CD14-positive monocyte (primary cell): ENCODE measurements at regions of chr1 and their contacts with region 1.

Region 1: DNA sequence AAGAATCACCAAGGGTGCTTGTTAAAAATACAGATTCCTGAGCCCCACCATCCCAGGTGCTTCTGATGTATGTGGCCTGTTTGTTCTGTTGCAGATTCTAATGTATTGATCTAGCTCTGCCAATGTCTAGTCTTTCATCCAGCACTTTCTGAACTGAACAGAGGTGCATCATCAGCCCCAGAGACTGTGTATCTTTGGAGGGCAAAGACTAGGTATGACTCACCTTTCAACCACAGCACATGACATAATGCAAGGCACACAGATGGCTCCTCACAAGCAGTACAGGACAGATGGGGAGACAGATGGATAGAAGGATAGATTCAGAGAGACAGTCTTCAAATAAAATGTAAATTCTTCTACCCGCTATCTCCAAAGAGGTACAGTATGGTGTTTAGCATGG is 32.3 kb downstream of the CD58 start:
- DNase-seq: peak; percentile 48 to 86 (median 55)
- H3K4me3 ChIP-seq: no peak overlapping the region
- H3K4me3 Mint-ChIP-seq: no peak overlapping the region
- H3K27ac ChIP-seq: peak overlapping the region in 1 of 2 donors; percentile 94
- H3K27ac Mint-ChIP-seq: peak overlapping the region; percentile 83 to 97 (median 95)
- H3K4me1 ChIP-seq: peaks cover 52 to 57% of the 10 kb centered on the region in 2 donors
- H3K4me1 Mint-ChIP-seq: peaks cover 58% of the 10 kb centered on the region
- H3K27me3 ChIP-seq: no peaks in the 10 kb centered on the region
- H3K27me3 Mint-ChIP-seq: peaks cover 0 to 3% (median 2%) of the 10 kb centered on the region in 3 donors
- CTCF ChIP-seq: no peak

Region 2: GRCh38 chr1:116372587-116373444 is 165.7 kb before region 1 on chr1 and contains the start of gene ATP1A1:
- intact Hi-C with region 1: loop called in 1 of 2 experiments (anchors 10 kb)
- DNase-seq: peak; percentile 95 to 98 (median 98)
- H3K4me3 ChIP-seq: peak within 1 kb of the TSS; percentile 68 to 93 (median 76)
- H3K4me3 Mint-ChIP-seq: peak within 1 kb of the TSS; percentile 94 to 96
- H3K27ac ChIP-seq: peak within 1 kb of the TSS; percentile 85 to 97
- H3K27ac Mint-ChIP-seq: peak within 1 kb of the TSS; percentile 86 to 98 (median 94)
- H3K4me1 ChIP-seq: peaks cover 52 to 55% of the 10 kb centered on the region in 2 donors
- H3K4me1 Mint-ChIP-seq: peaks cover 49% of the 10 kb centered on the region
- H3K27me3 ChIP-seq: no peaks in the 10 kb centered on the region
- H3K27me3 Mint-ChIP-seq: peaks cover 5 to 11% (median 5%) of the 10 kb centered on the region in 3 donors
- CTCF ChIP-seq: no peak
- polyA plus RNA-seq, gene ATP1A1: 32.3 to 135 (median 32.7) TPM

Region 3: GRCh38 chr1:116504308-116505156 is 34.0 kb before region 1 on chr1:
- intact Hi-C with region 1: loop called (anchors 2 kb)
- DNase-seq: peak; percentile 99 to 100 (median 99)
- H3K4me3 ChIP-seq: peak overlapping the region in 1 of 3 experiments; percentile 21
- H3K4me3 Mint-ChIP-seq: no peak overlapping the region
- H3K27ac ChIP-seq: peak overlapping the region; percentile 95 to 100
- H3K27ac Mint-ChIP-seq: peak overlapping the region; percentile 98 to 100 (median 99)
- H3K4me1 ChIP-seq: peaks cover 68 to 72% of the 10 kb centered on the region in 2 donors
- H3K4me1 Mint-ChIP-seq: peaks cover 68% of the 10 kb centered on the region
- H3K27me3 ChIP-seq: no peaks in the 10 kb centered on the region
- H3K27me3 Mint-ChIP-seq: peaks cover 0 to 4% (median 1%) of the 10 kb centered on the region in 3 donors
- CTCF ChIP-seq: no peak

Region 4: DNA sequence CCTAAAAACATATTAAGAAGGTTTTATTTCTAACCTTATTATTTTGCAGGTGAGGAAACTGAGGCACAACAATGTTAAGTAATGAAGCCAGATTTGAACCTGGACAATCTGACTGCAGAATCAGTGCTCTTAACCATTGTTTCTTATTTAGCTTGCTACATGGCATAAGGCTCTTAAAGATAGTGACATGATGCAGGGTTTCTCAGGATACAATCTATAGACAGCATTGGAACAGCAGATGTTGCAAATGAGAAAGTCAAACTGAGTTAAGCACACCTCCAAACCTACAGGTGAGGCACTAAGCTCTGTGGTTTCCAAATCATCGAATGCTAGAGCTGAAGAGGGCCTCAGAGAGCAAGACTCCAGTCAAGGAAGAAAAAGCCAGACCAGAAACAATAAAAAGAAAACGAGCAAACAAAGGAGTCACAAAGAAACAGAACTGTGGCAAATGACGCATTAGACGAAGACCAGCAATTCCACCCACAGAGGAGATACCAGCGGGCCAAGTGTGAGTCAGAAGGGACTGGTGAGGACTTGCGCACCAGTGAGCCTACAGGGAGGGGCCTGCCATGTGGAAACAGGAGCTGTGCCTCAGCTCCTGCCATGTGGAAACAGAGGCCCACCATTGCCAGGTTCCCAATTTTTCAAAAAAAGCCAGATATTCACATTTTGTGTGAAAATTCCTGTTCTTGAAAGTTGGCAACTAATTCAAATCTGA is 17.9 kb after region 1 on chr1:
- intact Hi-C with region 1: loop called in 1 of 2 experiments (anchors 1 kb)
- DNase-seq: peak; percentile 89 to 96 (median 91)
- H3K4me3 ChIP-seq: peak overlapping the region in 1 of 3 experiments; percentile 6
- H3K4me3 Mint-ChIP-seq: peak overlapping the region; percentile 24 to 53
- H3K27ac ChIP-seq: peak overlapping the region; percentile 9 to 94
- H3K27ac Mint-ChIP-seq: peak overlapping the region; percentile 94 to 99 (median 97)
- H3K4me1 ChIP-seq: peaks cover 65 to 75% of the 10 kb centered on the region in 2 donors
- H3K4me1 Mint-ChIP-seq: peaks cover 78% of the 10 kb centered on the region
- H3K27me3 ChIP-seq: no peaks in the 10 kb centered on the region
- H3K27me3 Mint-ChIP-seq: no peaks in the 10 kb centered on the region
- CTCF ChIP-seq: no peak